ENCODE measurements at regions of chr22 and their contacts with region 1.

Region 1: GRCh38 chr22:22745225-22746060 is 101.0 kb downstream of the GGTLC2 start:
- DNase-seq: peak; percentile 54
- CTCF ChIP-seq: peak; percentile 83

Region 2: DNA sequence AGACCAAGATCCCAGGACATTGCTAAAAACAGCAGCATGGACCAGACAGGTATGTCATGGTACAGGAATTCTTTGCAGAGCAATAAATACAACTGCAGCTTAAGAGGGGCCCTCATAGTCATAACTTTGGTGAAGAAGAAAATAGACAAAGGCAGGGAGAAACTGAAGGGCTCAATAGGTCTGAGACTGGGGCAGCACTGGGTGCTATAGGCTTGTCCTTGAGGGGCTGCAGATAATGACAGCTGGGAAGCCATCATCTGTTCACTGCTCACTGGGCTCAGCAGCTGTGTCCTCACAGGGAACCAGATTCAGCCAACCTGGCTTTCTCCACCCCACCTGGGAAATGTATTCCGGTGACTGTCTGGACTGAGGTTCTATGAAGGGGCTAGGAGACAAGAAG is 305.3 kb before region 1 on chr22:
- CTCF ChIA-PET with region 1: no interaction called
- POLR2A ChIA-PET with region 1: no interaction called
- DNase-seq: no peak
- CTCF ChIP-seq: no peak

Region 3: DNA sequence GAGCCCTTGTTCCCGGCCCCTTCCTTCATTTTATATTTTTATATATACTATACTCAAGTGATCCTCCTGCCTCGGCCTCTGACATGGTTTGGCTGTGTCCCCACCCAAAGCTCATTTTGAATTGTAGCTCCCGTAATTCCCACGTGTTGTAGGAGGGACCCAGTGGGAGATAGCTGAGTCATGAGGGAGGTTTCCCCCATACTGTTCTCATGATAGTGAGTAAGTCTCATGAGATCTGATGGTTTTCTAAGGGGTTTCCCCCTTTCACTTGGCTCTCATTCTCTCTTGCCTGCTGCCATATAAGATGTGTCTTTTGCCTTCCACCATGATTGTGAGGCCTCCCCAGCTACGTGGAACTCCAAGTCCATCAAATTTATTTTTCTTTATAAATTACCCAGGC is 218.1 kb before region 1 on chr22:
- CTCF ChIA-PET with region 1: no interaction called
- POLR2A ChIA-PET with region 1: no interaction called
- DNase-seq: no peak
- CTCF ChIP-seq: no peak

Region 4: DNA sequence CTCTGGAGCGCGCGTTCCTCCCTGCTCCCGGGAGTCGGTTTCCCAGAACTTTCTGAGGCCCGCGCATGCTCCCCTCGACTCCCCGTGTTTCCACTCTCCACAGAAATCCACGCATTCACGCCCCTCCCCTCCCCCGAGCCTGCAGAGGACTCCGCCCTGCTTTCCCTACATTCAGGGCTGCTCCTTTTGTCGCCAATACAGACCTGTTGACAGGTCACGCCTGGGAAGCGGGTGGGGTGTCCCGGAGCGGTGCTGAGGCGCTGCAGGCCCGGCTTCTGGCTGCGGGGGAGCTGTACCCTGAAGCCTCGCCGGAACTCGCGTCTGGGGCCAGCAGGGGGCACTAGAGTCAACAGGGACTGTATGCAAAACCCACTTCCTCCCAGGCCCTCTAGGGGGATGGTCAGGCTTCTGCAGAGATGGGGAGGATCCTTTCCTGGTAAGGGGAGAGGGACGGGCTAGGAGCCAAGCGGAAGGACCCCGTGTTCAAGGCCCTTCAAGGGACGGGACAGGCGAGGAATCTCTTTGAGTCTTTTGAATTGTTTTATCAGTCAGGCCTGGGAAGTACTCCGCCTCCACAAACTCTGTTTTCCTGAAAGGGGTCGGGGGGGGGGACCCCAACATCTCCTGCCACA is 186.4 kb before region 1 on chr22 and contains the start of gene PRAME:
- CTCF ChIA-PET with region 1: no interaction called
- POLR2A ChIA-PET with region 1: no interaction called
- DNase-seq: peak; percentile 87
- CTCF ChIP-seq: peak; percentile 72

Region 5: GRCh38 chr22:22666307-22667091 is 78.9 kb before region 1 on chr22:
- CTCF ChIA-PET with region 1: interaction called, 10 read pairs
- POLR2A ChIA-PET with region 1: no interaction called
- DNase-seq: peak; percentile 58
- CTCF ChIP-seq: peak; percentile 61

Region 6: DNA sequence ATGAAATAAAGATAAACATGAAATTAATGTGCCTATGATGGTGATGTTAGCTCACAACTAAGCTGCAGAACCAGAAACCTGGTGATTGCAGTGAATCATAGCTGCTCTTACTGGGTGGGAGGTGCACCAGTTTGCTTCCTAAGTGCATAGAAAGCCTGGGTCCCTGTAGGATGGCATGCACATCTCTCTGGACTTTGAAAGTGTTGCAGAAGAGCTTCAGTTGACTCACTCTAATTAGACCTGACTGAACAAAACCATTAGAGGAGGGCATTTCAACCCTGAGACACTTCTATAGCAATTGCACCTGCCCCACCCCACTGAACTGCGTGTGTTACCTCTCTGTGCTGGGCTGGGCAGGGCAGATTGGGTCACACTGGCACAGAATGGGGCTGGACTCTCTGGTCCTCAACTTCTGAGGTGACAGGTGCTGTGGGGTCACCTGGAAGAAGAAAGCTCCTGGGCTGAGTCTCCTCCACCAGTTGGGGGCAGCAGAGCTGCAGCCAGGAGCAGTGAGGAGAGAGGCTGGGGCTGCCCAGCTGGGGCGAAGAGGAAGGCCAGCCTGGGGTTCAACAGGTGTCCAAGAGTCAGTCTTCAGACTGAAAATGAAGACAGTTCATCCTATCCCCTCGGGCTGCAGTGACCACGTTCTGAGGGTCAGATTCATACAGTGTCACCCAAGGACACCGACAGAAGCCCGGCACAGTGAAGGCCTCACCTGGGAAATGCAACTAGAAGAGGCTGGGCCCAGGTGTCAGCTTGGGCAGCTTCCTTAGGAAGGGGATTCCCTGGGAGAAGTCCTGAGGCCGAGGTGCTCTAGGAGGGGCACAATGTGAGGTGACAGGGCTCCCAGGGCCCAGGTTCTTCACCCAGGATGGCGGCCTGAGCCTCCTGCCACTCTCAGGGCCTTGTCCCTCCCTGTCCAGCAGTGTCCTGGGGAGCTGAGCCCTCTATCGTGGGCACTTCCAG is 42.9 kb before region 1 on chr22:
- CTCF ChIA-PET with region 1: interaction called, 23 read pairs
- POLR2A ChIA-PET with region 1: no interaction called
- DNase-seq: no peak
- CTCF ChIP-seq: peak; percentile 72

Region 7: DNA sequence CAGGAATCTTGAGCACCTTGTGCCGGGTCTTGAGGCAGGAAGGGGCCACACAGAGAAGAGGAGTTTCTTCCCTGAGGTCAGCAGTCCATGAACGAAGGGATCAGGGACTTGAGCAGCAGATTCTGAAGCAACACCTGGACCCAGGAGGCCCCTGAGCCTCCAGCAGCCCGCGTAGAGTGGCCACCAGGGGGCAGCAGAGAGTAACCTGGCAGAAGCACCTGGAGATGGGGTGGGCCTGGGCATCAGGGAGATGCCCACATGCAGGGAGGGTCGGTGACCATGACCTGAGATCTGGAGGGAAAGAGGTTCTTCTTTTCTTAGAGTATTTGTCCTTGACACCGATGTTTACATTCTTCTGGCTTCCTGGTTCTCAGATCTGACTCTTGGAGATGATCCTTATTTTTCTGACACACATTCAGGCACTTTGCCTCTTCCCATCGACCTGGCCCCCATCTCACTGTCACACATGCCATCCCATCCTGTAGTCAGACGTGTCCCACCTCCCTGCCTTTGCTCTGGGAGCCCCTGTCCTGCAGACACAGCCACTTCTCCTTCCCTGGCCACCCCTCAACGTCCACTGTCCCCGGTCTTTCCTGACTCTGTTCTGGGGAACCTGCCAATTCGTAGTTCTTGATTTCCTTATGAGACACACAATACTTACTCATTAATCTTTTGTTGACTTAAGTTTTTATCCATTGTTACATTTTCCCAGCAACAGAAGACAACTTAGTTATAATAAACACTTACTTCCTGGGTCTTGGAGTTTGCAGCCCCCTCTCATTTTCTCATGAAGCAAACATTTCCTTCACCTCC is 34.5 kb before region 1 on chr22:
- CTCF ChIA-PET with region 1: interaction called, 29 read pairs
- POLR2A ChIA-PET with region 1: no interaction called
- DNase-seq: peak; percentile 71
- CTCF ChIP-seq: peak; percentile 90

Region 8: GRCh38 chr22:22720201-22720723 is 25.2 kb before region 1 on chr22:
- CTCF ChIA-PET with region 1: interaction called, 137 read pairs
- POLR2A ChIA-PET with region 1: no interaction called
- DNase-seq: peak; percentile 72
- CTCF ChIP-seq: peak; percentile 71

Region 9: GRCh38 chr22:22770280-22770871 is 24.9 kb after region 1 on chr22:
- CTCF ChIA-PET with region 1: interaction called, 62 read pairs
- POLR2A ChIA-PET with region 1: no interaction called
- DNase-seq: no peak
- CTCF ChIP-seq: peak; percentile 65

Region 10: DNA sequence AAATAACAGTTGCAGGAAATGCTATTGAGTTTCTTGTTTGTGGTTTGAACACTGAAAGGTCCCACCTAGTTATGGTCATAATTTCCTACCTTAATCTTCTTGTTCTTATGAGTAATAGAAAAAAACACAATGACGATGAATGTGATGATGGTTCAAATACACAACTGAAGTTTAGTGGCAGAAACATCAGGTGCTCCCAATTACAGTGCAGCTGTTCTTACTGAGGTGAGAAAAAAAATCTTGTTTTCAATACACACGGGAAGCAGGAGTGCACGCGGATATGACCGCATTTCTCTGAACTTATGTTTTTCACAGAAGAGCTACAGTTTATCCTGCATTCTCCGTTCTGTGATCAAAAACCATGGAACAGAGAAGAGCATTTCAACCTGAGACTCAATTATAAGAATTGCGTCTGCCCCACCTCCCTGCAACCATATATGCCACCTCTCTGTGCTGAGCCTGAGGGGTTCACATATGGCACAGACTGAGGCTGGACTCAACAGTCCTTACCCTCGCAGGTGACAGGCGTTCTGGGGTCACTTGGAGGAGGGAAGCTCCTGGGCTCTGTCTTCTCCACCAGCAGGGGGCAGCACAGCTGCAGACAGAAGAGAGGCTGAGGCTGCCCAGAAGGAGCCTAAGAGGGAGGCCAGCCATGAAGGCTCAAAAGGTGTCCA is 42.5 kb after region 1 on chr22:
- CTCF ChIA-PET with region 1: interaction called, 19 read pairs
- POLR2A ChIA-PET with region 1: no interaction called
- DNase-seq: peak; percentile 79
- CTCF ChIP-seq: peak; percentile 85